Activated T-helper 1 cell treated with anti-CD3 and anti-CD28 coated beads, Interleukin-12 subunit alpha, Interleukin-12 subunit beta, Interleukin-2, Interleukin-4 antibody, amounts not matched to agents 30 ng/mL and 10 ng/mL and 1 ng/mL, durations not matched to agents 14 hours and 24 hours and 36 hours (primary cell): ENCODE measurements at regions of chr6 and their contacts with region 1.

Region 1: GRCh38 chr6:149140137-149140909 is 177.2 kb upstream of the TAB2 start:
- DNase-seq: peak; percentile 62
- H3K4me3 Mint-ChIP-seq: peak overlapping the region; percentile 84
- H3K27ac Mint-ChIP-seq: peak overlapping the region; percentile 100
- H3K4me1 Mint-ChIP-seq: peaks cover 64% of the 10 kb centered on the region
- H3K27me3 Mint-ChIP-seq: no peaks in the 10 kb centered on the region

Region 2: GRCh38 chr6:149082286-149082707 is 58.0 kb before region 1 on chr6:
- intact Hi-C with region 1: loop called (anchors 1 kb)
- DNase-seq: peak; percentile 81
- H3K4me3 Mint-ChIP-seq: peak overlapping the region; percentile 80
- H3K27ac Mint-ChIP-seq: peak overlapping the region; percentile 92
- H3K4me1 Mint-ChIP-seq: peaks cover 89% of the 10 kb centered on the region
- H3K27me3 Mint-ChIP-seq: no peaks in the 10 kb centered on the region

Region 3: DNA sequence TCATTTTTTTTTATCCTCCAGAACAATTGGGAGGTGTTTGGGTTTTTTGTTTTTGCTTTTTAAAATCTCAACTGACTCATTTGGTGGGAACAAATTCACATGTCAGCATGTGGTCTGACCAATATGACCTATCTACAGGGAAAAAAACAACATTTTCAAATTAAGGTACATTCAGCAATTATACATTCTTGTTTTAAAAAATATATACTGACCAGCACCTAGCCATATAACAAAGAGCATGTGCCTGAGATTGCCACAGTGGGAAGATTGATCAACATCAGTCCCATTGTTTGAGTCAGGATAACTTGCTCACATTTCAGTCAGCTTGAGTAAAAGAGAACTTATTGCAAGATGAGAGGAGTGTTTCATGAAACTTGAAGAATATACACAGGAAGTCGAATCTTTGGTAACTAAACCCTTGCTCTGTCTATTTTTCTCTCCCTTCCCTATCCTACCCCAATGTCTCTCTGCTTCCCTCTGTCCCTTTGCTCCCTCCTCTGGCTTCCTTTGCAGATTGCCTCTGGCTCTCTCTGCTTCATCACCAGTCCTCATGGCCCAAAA is 14.0 kb after region 1 on chr6:
- intact Hi-C with region 1: loop called (anchors 2 kb)
- DNase-seq: no peak
- H3K4me3 Mint-ChIP-seq: peak overlapping the region; percentile 21
- H3K27ac Mint-ChIP-seq: peak overlapping the region; percentile 99
- H3K4me1 Mint-ChIP-seq: peaks cover 84% of the 10 kb centered on the region
- H3K27me3 Mint-ChIP-seq: no peaks in the 10 kb centered on the region

Region 4: DNA sequence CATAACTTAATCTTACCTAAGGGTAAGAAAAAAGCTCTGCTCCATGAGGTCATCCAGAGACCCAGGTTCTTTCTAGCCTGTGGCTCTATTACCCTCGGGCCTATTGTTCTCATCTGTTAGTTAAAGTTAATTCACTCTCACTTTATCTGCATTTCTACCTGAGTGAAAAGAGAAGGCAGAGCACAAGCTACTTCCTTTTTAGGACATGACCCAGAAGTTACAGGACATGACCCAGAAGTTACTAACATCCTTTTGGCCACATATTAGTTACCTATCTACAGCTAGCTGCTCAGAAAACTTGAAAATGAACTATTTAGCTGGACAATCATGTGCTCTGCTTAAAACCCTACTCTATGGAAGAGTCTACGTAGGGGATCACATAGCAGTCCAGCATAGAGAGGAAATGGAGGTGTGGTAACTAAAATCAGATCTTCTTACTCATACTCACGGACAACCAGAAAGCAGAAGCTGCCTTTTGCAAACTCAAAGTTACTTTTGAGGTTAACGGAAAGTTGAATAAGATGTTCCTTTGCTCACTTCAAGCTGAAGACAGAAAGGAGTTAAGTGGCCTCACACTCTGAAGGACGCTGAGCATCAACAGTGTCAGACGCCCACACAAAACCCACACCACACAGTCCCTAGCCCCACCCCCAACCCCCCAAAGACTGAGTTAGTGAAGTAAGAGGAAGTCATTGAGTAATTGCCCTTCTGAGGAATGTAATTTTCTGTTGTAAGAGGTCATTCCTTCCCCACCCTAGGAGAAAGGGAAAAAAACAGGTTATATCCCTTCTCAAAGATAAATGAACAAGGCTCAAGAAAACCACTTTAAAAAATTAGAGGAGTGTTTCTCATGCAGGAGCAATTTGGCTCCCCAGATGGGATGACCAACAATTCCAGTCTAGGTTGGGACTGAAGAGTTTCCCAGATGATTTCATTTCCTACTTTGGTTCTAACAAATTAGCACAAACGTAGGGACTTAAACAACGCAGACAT is 131.3 kb after region 1 on chr6:
- intact Hi-C with region 1: loop called (anchors 2 kb)
- DNase-seq: no peak
- H3K4me3 Mint-ChIP-seq: peak overlapping the region; percentile 62
- H3K27ac Mint-ChIP-seq: peak overlapping the region; percentile 94
- H3K4me1 Mint-ChIP-seq: peaks cover 56% of the 10 kb centered on the region
- H3K27me3 Mint-ChIP-seq: no peaks in the 10 kb centered on the region

Region 5: GRCh38 chr6:149389509-149390297 is 249.4 kb after region 1 on chr6:
- intact Hi-C with region 1: loop called (anchors 1 kb)
- DNase-seq: no peak
- H3K4me3 Mint-ChIP-seq: no peak overlapping the region
- H3K27ac Mint-ChIP-seq: peak overlapping the region; percentile 45
- H3K4me1 Mint-ChIP-seq: peaks cover 82% of the 10 kb centered on the region
- H3K27me3 Mint-ChIP-seq: no peaks in the 10 kb centered on the region

Region 6: DNA sequence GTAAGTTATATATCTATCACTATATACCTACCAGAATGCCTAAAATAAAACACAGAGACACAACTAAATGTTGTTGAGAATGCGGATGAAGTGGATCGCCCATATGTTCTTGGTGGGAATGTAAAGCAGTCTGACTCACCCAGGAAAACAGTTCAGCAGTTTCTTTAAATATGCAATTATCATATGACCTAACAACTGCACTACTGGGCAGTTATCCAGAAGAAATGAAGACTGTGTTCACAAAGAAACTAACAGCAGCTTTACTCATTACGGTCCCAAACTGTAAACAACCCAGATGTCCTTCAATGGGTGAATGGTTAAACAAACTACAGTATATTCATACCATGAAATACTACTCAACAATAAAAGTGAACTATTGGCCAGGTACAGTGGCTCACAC is 358.7 kb after region 1 on chr6:
- intact Hi-C with region 1: loop called (anchors 5 kb)
- DNase-seq: no peak
- H3K4me3 Mint-ChIP-seq: no peak overlapping the region
- H3K27ac Mint-ChIP-seq: peak overlapping the region; percentile 83
- H3K4me1 Mint-ChIP-seq: peaks cover 78% of the 10 kb centered on the region
- H3K27me3 Mint-ChIP-seq: no peaks in the 10 kb centered on the region